Naive thymus-derived CD4-positive, alpha-beta T cell (primary cell): ENCODE measurements at regions of chr20 and their contacts with region 1.

Region 1: DNA sequence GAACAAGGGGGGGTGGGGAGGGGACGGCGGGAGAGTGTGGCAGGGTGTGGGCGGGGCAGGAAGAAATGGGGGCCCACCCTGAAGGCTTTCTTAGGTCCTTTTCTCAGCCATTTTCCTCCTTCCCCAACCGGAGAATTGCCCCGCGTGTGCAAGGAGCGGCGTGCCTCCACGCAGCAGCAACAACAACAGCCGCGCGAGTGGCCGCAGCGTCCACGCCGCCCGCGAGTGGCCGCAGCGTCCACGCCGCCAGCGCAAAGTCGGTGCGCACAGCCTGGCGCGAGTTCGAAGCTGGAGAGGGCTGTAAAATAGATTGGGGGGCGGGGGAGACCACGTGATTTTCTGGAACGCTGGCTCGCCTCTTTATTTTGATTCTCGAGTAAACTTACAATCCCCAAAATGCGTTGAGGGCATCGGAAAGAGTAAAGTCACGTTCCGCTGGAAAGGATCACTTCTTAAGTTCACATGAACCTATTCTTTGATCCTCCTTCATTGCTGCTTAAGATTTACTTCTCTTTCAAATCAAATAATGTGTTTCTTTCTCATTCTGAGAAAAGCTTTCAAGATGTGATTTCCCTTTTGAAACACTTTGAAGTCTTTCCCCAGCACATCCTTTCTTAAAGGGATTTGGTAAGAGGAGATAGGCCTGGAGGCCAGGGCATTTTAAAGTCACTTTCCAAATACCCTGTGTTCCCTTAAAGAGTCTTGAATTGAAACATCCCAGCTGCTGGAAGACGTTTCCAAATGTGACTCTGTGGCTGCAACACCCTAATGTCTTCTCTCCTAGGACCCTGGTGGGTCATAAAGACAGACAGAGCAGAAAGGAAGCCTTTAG is 66.7 kb upstream of the ZNF217 start:
- DNase-seq: peak; percentile 11 to 54 (median 39)
- ATAC-seq: peak; percentile 36
- H3K4me3 ChIP-seq: peak overlapping the region; percentile 71
- H3K4me3 Mint-ChIP-seq: peak overlapping the region; percentile 69 to 92 (median 86)
- H3K27ac ChIP-seq: peak overlapping the region; percentile 74
- H3K27ac Mint-ChIP-seq: peak overlapping the region; percentile 79 to 96 (median 92)
- H3K4me1 ChIP-seq: peaks cover 12 to 32% of the 10 kb centered on the region in 2 donors
- H3K4me1 Mint-ChIP-seq: peaks cover 40 to 79% (median 70%) of the 10 kb centered on the region in 7 donors
- H3K27me3 ChIP-seq: no peaks in the 10 kb centered on the region
- H3K27me3 Mint-ChIP-seq: no peaks in the 10 kb centered on the region

Region 2: GRCh38 chr20:53559816-53560215 is 100.5 kb before region 1 on chr20:
- CTCF ChIA-PET with region 1: no interaction called
- POLR2A ChIA-PET with region 1: no interaction called
- intact Hi-C with region 1: no loop called
- DNase-seq: no peak
- ATAC-seq: no peak
- H3K4me3 ChIP-seq: no peak overlapping the region
- H3K4me3 Mint-ChIP-seq: no peak overlapping the region
- H3K27ac ChIP-seq: no peak overlapping the region
- H3K27ac Mint-ChIP-seq: no peak overlapping the region
- H3K4me1 ChIP-seq: no peaks in the 10 kb centered on the region
- H3K4me1 Mint-ChIP-seq: peaks cover 0 to 8% (median 0%) of the 10 kb centered on the region in 7 donors
- H3K27me3 ChIP-seq: no peaks in the 10 kb centered on the region
- H3K27me3 Mint-ChIP-seq: no peaks in the 10 kb centered on the region

Region 3: GRCh38 chr20:53594068-53595017 is 66.0 kb before region 1 on chr20:
- CTCF ChIA-PET with region 1: interaction called, 5 read pairs
- POLR2A ChIA-PET with region 1: interaction called, 29 read pairs
- intact Hi-C with region 1: loop called in 1 of 2 experiments (anchors 1 kb)
- DNase-seq: peak; percentile 93 to 100 (median 96)
- ATAC-seq: peak; percentile 90
- H3K4me3 ChIP-seq: peak overlapping the region; percentile 81
- H3K4me3 Mint-ChIP-seq: peak overlapping the region; percentile 89 to 99 (median 92)
- H3K27ac ChIP-seq: peak overlapping the region; percentile 97
- H3K27ac Mint-ChIP-seq: peak overlapping the region; percentile 90 to 98 (median 97)
- H3K4me1 ChIP-seq: peaks cover 14 to 21% of the 10 kb centered on the region in 2 donors
- H3K4me1 Mint-ChIP-seq: peaks cover 23 to 66% (median 54%) of the 10 kb centered on the region in 7 donors
- H3K27me3 ChIP-seq: no peaks in the 10 kb centered on the region
- H3K27me3 Mint-ChIP-seq: no peaks in the 10 kb centered on the region

Region 4: DNA sequence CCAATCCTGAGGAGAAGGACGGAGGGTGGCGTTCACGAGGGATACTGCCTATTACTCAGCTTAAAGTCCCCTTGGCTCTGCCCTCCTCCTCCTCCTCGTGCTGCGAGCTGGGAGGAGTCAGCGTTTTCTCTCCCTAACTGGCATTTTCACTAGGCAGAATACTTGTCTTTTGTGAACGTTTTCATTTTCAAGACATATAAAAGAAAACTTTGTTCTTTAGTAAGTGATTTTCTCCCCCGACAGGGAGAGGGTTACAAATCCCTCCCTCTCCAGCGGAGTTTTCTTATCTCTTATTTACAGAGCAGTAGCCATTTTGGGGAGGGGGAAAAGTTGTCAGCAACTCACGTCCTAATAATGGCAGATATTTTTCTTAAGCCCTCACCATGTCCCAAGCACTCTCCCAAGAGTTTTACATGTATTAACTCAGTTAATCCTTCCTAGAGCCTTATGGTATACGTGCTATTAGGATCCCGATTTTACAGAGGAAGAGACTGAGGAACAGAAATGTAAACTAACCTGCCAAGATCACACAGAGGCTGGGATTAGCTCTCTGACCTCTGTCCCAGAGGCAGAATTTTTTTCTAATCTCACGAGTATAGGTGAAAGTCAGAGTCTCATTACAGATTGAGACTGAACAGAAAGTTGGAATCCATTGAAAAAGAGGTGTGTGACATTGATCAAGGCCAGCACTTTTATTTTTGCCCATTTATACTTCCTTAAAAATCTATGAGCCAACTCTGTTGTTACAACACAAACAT is 36.7 kb before region 1 on chr20:
- CTCF ChIA-PET with region 1: interaction called, 6 read pairs
- POLR2A ChIA-PET with region 1: interaction called, 14 read pairs
- intact Hi-C with region 1: loop called in 1 of 2 experiments (anchors 5 kb)
- DNase-seq: peak in 4 of 9 donors; percentile 28 to 44 (median 31)
- ATAC-seq: peak; percentile 83
- H3K4me3 ChIP-seq: peak overlapping the region; percentile 56
- H3K4me3 Mint-ChIP-seq: peak overlapping the region; percentile 78 to 92 (median 87)
- H3K27ac ChIP-seq: peak overlapping the region; percentile 74
- H3K27ac Mint-ChIP-seq: peak overlapping the region; percentile 91 to 98 (median 97)
- H3K4me1 ChIP-seq: peaks cover 31 to 32% of the 10 kb centered on the region in 2 donors
- H3K4me1 Mint-ChIP-seq: peaks cover 17 to 53% (median 44%) of the 10 kb centered on the region in 7 donors
- H3K27me3 ChIP-seq: no peaks in the 10 kb centered on the region
- H3K27me3 Mint-ChIP-seq: no peaks in the 10 kb centered on the region

Region 5: GRCh38 chr20:53677447-53678314 is 17.4 kb after region 1 on chr20:
- CTCF ChIA-PET with region 1: interaction called, 4 read pairs
- POLR2A ChIA-PET with region 1: interaction called, 7 read pairs
- intact Hi-C with region 1: loop called in 1 of 2 experiments (anchors 2 kb)
- DNase-seq: peak in 7 of 9 donors; percentile 19 to 51 (median 37)
- ATAC-seq: peak; percentile 50
- H3K4me3 ChIP-seq: peak overlapping the region; percentile 18
- H3K4me3 Mint-ChIP-seq: peak overlapping the region; percentile 30 to 88 (median 78)
- H3K27ac ChIP-seq: peak overlapping the region; percentile 51
- H3K27ac Mint-ChIP-seq: peak overlapping the region; percentile 68 to 94 (median 87)
- H3K4me1 ChIP-seq: peaks cover 0 to 25% of the 10 kb centered on the region in 2 donors
- H3K4me1 Mint-ChIP-seq: peaks cover 19 to 37% (median 34%) of the 10 kb centered on the region in 7 donors
- H3K27me3 ChIP-seq: no peaks in the 10 kb centered on the region
- H3K27me3 Mint-ChIP-seq: no peaks in the 10 kb centered on the region

Region 6: DNA sequence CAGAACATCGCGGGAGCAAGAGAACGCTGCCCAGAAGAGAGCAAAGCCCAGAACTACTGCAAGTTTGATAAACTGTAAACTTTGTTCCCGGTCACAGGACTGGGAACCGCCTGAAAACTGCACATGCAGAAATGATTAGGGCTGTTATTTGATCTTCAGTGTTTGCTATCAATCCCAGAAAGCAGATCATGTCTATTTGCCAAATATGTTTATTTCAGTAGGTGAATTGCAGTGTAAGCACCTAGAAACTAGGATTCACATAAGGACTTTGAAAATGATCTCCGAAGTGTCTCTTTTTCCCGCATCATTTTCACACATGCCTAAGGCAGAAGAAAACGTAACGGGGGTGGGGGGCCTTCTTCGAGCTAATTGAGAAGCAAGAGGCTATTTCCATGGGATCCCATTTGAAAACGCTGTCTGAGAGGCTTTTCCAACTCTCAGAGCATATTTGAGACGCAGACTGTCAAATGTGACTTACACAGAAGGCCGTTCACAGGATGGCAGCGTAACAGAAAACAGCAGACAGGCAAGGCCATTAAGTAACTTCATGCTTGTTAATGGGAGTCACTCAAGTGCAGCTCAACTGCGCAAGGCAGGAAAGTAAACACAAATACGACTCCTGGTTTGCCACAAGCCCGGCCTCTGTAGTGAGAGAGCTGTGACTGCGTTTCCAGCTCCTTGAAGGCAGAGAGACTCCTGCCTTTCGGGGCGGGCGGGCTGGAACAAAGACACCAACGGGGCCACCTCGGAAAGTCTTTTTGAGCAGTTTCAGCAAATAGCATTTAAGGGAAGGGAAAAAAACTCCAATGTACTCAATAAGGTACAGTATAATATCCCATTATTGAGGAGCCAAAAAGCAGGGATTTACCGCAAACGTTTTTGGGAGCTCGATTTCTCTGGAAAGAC is 78.0 kb after region 1 on chr20:
- CTCF ChIA-PET with region 1: no interaction called
- POLR2A ChIA-PET with region 1: interaction called, 4 read pairs
- intact Hi-C with region 1: loop called in 1 of 2 experiments (anchors 5 kb)
- DNase-seq: no peak
- ATAC-seq: no peak
- H3K4me3 ChIP-seq: no peak overlapping the region
- H3K4me3 Mint-ChIP-seq: peak overlapping the region in 1 of 10 donors; percentile 70
- H3K27ac ChIP-seq: no peak overlapping the region
- H3K27ac Mint-ChIP-seq: peak overlapping the region in 5 of 9 donors; percentile 8 to 87 (median 43)
- H3K4me1 ChIP-seq: peaks cover 0 to 14% of the 10 kb centered on the region in 2 donors
- H3K4me1 Mint-ChIP-seq: peaks cover 28 to 68% (median 50%) of the 10 kb centered on the region in 7 donors
- H3K27me3 ChIP-seq: no peaks in the 10 kb centered on the region
- H3K27me3 Mint-ChIP-seq: no peaks in the 10 kb centered on the region

Region 7: GRCh38 chr20:53795170-53795569 is 134.9 kb after region 1 on chr20:
- CTCF ChIA-PET with region 1: no interaction called
- POLR2A ChIA-PET with region 1: no interaction called
- intact Hi-C with region 1: no loop called
- DNase-seq: no peak
- ATAC-seq: no peak
- H3K4me3 ChIP-seq: no peak overlapping the region
- H3K4me3 Mint-ChIP-seq: no peak overlapping the region
- H3K27ac ChIP-seq: no peak overlapping the region
- H3K27ac Mint-ChIP-seq: peak overlapping the region in 1 of 9 donors; percentile 25
- H3K4me1 ChIP-seq: no peaks in the 10 kb centered on the region
- H3K4me1 Mint-ChIP-seq: peaks cover 0 to 4% (median 0%) of the 10 kb centered on the region in 7 donors
- H3K27me3 ChIP-seq: no peaks in the 10 kb centered on the region
- H3K27me3 Mint-ChIP-seq: no peaks in the 10 kb centered on the region